ENCODE measurements at regions of chr3 and their contacts with region 1.

Region 1: DNA sequence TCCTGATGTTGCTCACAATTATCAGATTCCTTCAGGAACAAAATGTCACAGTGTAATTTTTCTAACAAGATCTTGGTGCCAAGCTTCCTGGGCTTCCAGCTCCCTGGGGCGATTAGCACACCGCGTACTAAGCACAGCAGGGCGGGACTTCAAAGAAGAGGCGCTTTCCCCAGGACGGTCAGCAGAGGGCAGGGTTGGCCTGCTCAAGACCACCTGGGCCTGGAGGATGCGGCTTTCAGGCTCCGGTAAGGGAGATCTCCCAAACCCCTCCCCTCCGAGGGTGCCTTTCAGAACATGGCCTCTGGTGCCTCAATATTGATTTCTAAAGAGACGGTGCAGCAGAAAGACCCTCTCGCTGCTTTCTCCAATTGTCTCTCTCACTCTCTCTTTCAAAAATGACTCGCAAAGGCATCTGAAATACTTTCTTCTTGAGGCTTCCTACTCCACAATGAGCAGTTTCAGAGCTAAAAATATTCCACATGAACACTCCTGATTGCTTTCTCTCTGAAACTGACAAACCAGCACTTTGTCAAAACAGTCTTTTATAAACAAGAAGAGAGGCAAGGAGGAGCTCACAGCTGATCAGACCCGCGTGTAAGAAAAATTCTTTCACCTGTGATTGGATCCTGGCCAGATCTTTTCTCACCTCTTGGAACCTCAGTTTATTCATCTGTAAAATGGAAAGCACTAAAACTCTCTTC is 154.0 kb downstream of the ADAMTS9 start:
- DNase-seq: peak; percentile 36 to 93
- H3K4me3 ChIP-seq: peak overlapping the region in 1 of 2 donors; percentile 25
- H3K27ac ChIP-seq: peak overlapping the region in 1 of 2 donors; percentile 41
- H3K4me1 ChIP-seq: peaks cover 0 to 10% of the 10 kb centered on the region in 2 donors
- H3K27me3 ChIP-seq: no peaks in the 10 kb centered on the region
- CTCF ChIP-seq: peak; percentile 73 to 90 (median 82)

Region 2: GRCh38 chr3:64291345-64291744 is 242.4 kb before region 1 on chr3:
- intact Hi-C with region 1: no loop called
- DNase-seq: peak in 1 of 2 donors; percentile 79
- H3K4me3 ChIP-seq: no peak overlapping the region
- H3K27ac ChIP-seq: no peak overlapping the region
- H3K4me1 ChIP-seq: peaks cover 0 to 4% of the 10 kb centered on the region in 2 donors
- H3K27me3 ChIP-seq: no peaks in the 10 kb centered on the region
- CTCF ChIP-seq: no peak

Region 3: DNA sequence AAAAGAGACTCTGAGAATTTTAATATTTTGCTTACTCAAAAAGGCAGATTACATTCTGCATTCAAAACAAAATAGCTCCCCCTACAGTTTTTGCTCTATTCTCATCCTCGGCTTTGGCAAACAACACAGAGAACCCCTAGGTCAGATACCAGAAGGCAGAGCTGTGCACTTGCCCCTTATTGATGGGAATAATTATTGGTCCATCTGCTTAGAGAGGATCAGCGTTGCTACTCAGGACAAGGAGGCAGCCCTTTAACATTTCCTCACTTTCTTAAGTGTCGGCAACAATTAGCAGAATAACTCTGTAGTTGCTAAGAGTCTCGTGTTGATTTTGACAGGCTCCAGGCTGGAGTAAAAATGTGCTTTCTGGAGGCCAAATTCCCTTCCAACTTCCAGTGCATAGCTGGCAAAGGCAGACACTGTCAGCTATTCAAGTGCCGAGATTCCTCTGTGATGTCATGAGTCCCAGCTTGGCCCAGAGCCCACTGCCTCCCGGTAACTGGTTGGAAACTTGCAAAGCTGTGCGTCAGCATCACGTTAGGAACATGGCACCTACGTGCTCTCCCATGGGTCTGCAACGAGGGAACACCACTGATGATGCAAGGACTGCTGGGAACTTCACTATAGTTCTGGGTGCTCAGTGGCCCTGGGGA is 636.7 kb after region 1 on chr3:
- intact Hi-C with region 1: loop called (anchors 5 kb)
- DNase-seq: peak; percentile 90 to 98
- H3K4me3 ChIP-seq: peak overlapping the region in 1 of 2 donors; percentile 5
- H3K27ac ChIP-seq: peak overlapping the region; percentile 72 to 78
- H3K4me1 ChIP-seq: peaks cover 0 to 6% of the 10 kb centered on the region in 2 donors
- H3K27me3 ChIP-seq: no peaks in the 10 kb centered on the region
- CTCF ChIP-seq: peak in 2 of 3 experiments; percentile 12 to 49

Region 4: DNA sequence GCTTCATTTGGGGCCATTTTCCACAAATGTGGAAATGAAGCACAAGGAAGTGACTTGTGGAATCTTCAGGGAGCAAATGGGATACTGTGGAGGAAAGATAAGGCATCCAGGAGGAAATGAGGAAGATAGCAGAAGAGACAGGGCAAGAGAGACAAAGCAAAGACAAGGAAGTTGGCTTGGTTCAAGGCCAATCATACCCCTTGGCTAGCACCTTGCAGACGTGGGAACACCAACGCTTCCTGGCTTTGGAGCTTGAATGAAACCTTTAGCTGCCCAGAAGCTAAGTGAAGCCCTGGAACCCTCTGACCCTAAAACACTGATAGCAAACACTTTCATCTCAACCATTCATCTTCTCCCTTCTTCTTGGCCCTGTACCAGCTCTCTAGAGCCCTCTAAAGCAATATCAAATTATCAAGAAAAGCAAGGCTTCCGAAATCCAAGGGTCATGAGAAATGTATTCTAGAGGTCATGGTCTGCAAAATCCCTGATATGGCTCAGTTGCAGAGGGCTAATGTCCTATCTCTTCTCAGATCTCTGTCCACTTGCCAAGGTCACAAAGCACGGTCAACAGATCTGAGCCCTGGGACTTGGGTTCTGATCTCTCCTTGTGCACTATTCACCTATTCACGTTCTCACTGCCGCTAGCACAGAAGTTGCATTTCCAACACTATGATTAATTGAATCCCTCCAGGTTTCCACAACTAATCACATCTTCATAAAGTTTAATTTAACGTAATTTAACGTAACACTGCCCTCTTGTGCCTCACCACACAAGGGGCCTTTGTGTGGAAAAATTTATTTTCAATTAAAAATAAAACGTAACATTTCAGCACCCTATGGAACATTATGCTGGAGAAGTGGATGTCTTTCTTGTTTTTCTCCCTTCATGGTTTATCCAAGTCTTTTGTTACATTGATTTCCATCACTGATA is 711.6 kb after region 1 on chr3:
- intact Hi-C with region 1: loop called (anchors 1 kb)
- DNase-seq: no peak
- H3K4me3 ChIP-seq: no peak overlapping the region
- H3K27ac ChIP-seq: no peak overlapping the region
- H3K4me1 ChIP-seq: no peaks in the 10 kb centered on the region
- H3K27me3 ChIP-seq: no peaks in the 10 kb centered on the region
- CTCF ChIP-seq: peak in 2 of 3 experiments; percentile 42 to 63

Region 5: GRCh38 chr3:65412588-65412987 is 878.8 kb after region 1 on chr3:
- intact Hi-C with region 1: loop called (anchors 10 kb)
- DNase-seq: no peak
- H3K4me3 ChIP-seq: no peak overlapping the region
- H3K27ac ChIP-seq: no peak overlapping the region
- H3K4me1 ChIP-seq: peaks cover 0 to 15% of the 10 kb centered on the region in 2 donors
- H3K27me3 ChIP-seq: no peaks in the 10 kb centered on the region
- CTCF ChIP-seq: peak in 1 of 3 experiments; percentile 9

Region 6: GRCh38 chr3:65732051-65732935 is 1198.5 kb after region 1 on chr3:
- intact Hi-C with region 1: loop called (anchors 5 kb)
- DNase-seq: no peak
- H3K4me3 ChIP-seq: no peak overlapping the region
- H3K27ac ChIP-seq: no peak overlapping the region
- H3K4me1 ChIP-seq: peaks cover 7 to 13% of the 10 kb centered on the region in 2 donors
- H3K27me3 ChIP-seq: no peaks in the 10 kb centered on the region
- CTCF ChIP-seq: peak; percentile 45 to 83 (median 72)

Measured in ascending aorta (tissue), 2 donors.